ENCODE measurements at regions of chr18 and their contacts with region 1.

Region 1: GRCh38 chr18:44819944-44820510 is 139.3 kb downstream of the SETBP1 start:
- DNase-seq: no peak
- ATAC-seq: no peak
- H3K4me3 Mint-ChIP-seq: no peak overlapping the region
- H3K27ac Mint-ChIP-seq: no peak overlapping the region
- H3K4me1 Mint-ChIP-seq: peaks cover 28% of the 10 kb centered on the region
- H3K27me3 Mint-ChIP-seq: peaks cover 23% of the 10 kb centered on the region

Region 2: GRCh38 chr18:44725300-44726096 is 94.5 kb before region 1 on chr18:
- CTCF ChIA-PET with region 1: interaction called, 3 read pairs
- POLR2A ChIA-PET with region 1: interaction called, 5 read pairs
- intact Hi-C with region 1: loop called in 1 of 2 experiments (anchors 1 kb)
- DNase-seq: peak; percentile 81
- ATAC-seq: peak; percentile 78
- H3K4me3 Mint-ChIP-seq: peak overlapping the region; percentile 17
- H3K27ac Mint-ChIP-seq: peak overlapping the region; percentile 80
- H3K4me1 Mint-ChIP-seq: peaks cover 80% of the 10 kb centered on the region
- H3K27me3 Mint-ChIP-seq: peaks cover 2% of the 10 kb centered on the region

Region 3: DNA sequence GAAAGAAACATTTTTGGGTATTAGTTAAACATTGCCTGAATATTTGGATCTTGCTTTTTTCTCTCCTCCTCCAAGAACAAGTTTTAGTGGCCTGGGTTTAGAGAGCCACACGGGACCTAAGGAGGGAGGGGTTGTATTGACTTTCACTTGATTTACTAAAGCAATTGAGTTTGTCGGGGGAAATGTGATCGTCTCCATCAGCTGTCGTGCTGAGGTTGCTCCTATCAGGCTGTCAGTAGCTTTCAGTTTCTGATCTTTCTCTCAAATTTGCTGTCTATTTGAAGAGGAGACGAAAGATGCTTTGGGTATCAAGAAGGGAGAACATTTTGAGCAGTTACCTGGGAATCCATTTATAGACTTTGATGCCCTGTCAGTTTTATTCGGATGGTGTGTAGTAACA is 33.3 kb before region 1 on chr18:
- CTCF ChIA-PET with region 1: no interaction called
- POLR2A ChIA-PET with region 1: no interaction called
- intact Hi-C with region 1: no loop called
- DNase-seq: no peak
- ATAC-seq: no peak
- H3K4me3 Mint-ChIP-seq: no peak overlapping the region
- H3K27ac Mint-ChIP-seq: no peak overlapping the region
- H3K4me1 Mint-ChIP-seq: peaks cover 6% of the 10 kb centered on the region
- H3K27me3 Mint-ChIP-seq: peaks cover 3% of the 10 kb centered on the region

Region 4: GRCh38 chr18:44799907-44800421 is 20.1 kb before region 1 on chr18:
- CTCF ChIA-PET with region 1: no interaction called
- POLR2A ChIA-PET with region 1: no interaction called
- intact Hi-C with region 1: loop called in 1 of 2 experiments (anchors 1 kb)
- DNase-seq: no peak
- ATAC-seq: peak; percentile 14
- H3K4me3 Mint-ChIP-seq: no peak overlapping the region
- H3K27ac Mint-ChIP-seq: peak overlapping the region; percentile 2
- H3K4me1 Mint-ChIP-seq: peaks cover 58% of the 10 kb centered on the region
- H3K27me3 Mint-ChIP-seq: peaks cover 4% of the 10 kb centered on the region

Region 5: DNA sequence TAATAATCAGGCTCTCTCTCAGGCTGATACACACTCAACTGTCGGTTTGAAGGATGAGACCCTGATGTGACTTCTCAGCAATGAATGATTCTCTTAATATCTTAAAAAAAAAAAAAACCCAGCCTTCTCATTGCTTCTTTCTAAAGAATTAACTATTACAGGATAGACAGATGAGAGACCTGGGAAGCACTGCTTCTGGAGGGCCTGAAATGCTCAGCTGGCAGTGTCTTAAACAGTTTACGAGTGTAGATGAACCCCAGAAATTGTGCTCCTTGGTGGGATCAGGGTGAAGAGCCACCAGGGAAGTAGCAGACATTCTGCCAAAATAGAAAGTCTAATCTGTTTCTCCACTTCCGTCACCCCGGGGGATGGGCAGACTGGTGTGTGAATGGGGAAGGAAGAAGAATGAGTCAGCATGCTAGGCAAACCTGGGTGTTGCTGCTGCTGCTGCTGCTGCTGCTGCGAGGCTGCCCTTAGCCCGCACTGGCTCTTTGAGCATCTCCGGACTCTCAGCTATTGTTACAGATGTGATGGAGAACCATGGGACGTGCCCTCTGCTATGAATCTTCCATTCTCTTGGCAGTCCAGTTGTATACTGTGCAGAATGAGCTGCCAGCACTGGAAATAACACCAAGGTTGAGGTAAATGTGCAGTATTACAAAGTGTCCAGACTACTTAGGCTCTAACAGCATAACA is 19.1 kb after region 1 on chr18:
- CTCF ChIA-PET with region 1: no interaction called
- POLR2A ChIA-PET with region 1: no interaction called
- intact Hi-C with region 1: loop called in 1 of 2 experiments (anchors 2 kb)
- DNase-seq: peak; percentile 83
- ATAC-seq: peak; percentile 99
- H3K4me3 Mint-ChIP-seq: no peak overlapping the region
- H3K27ac Mint-ChIP-seq: peak overlapping the region; percentile 30
- H3K4me1 Mint-ChIP-seq: peaks cover 10% of the 10 kb centered on the region
- H3K27me3 Mint-ChIP-seq: no peaks in the 10 kb centered on the region

Region 6: DNA sequence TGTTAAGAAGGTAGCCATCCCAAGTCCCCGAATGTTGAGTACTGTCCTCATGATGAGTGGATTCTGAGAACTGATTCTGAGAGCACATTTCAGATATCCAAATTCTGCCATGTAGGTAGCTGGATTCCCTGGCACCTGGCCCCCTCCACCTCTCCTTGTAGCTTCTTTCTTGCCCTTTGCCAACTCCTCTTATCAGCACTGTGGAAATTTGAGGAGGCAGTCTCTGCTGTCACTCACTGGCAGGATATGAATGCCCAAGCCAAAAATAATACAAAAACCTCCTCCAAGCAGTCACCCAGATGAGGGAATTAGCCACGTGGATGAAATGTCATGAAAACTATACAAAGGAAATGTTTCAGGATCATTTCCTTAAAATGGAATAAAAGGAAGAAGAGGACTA is 137.4 kb after region 1 on chr18:
- CTCF ChIA-PET with region 1: no interaction called
- POLR2A ChIA-PET with region 1: no interaction called
- intact Hi-C with region 1: no loop called
- DNase-seq: no peak
- ATAC-seq: no peak
- H3K4me3 Mint-ChIP-seq: no peak overlapping the region
- H3K27ac Mint-ChIP-seq: no peak overlapping the region
- H3K4me1 Mint-ChIP-seq: no peaks in the 10 kb centered on the region
- H3K27me3 Mint-ChIP-seq: peaks cover 3% of the 10 kb centered on the region

Region 7: GRCh38 chr18:45335282-45336043 is 515.4 kb after region 1 on chr18:
- CTCF ChIA-PET with region 1: no interaction called
- POLR2A ChIA-PET with region 1: no interaction called
- intact Hi-C with region 1: no loop called
- DNase-seq: no peak
- ATAC-seq: no peak
- H3K4me3 Mint-ChIP-seq: no peak overlapping the region
- H3K27ac Mint-ChIP-seq: no peak overlapping the region
- H3K4me1 Mint-ChIP-seq: no peaks in the 10 kb centered on the region
- H3K27me3 Mint-ChIP-seq: peaks cover 6% of the 10 kb centered on the region